ENCODE measurements at regions of chr16 and their contacts with region 1.

Region 1: GRCh38 chr16:88743693-88744576 is 37.6 kb downstream of the CTU2 start:
- DNase-seq: peak; percentile 77 to 88 (median 82)
- ATAC-seq: peak in 3 of 4 donors; percentile 55 to 69 (median 58)
- H3K4me3 ChIP-seq: peak overlapping the region in 1 of 12 donors; percentile 3
- H3K27ac ChIP-seq: peak overlapping the region in 7 of 12 donors; percentile 49 to 84 (median 75)
- H3K4me1 ChIP-seq: peaks cover 0 to 43% (median 27%) of the 10 kb centered on the region in 12 donors
- H3K27me3 ChIP-seq: no peaks in the 10 kb centered on the region
- CTCF ChIP-seq: peak in 11 of 12 donors; percentile 77 to 94 (median 89)
- POLR2A ChIP-seq: no peak

Region 2: GRCh38 chr16:88773812-88774291 is 29.9 kb after region 1 on chr16:
- intact Hi-C with region 1: no loop called
- DNase-seq: peak in 4 of 5 donors; percentile 75 to 83 (median 81)
- ATAC-seq: peak; percentile 61 to 80 (median 76)
- H3K4me3 ChIP-seq: no peak overlapping the region
- H3K27ac ChIP-seq: peak overlapping the region in 5 of 12 donors; percentile 14 to 83 (median 24)
- H3K4me1 ChIP-seq: peaks cover 3 to 81% (median 55%) of the 10 kb centered on the region in 12 donors
- H3K27me3 ChIP-seq: no peaks in the 10 kb centered on the region
- CTCF ChIP-seq: no peak
- POLR2A ChIP-seq: no peak

Region 3: GRCh38 chr16:88785106-88785924 is 41.4 kb after region 1 on chr16 and contains the start of gene PIEZO1:
- intact Hi-C with region 1: loop called (anchors 1 to 2 kb)
- DNase-seq: peak; percentile 71 to 90 (median 77)
- ATAC-seq: peak in 3 of 4 donors; percentile 34 to 74 (median 70)
- H3K4me3 ChIP-seq: peak within 1 kb of the TSS; percentile 56 to 92 (median 70)
- H3K27ac ChIP-seq: peak within 1 kb of the TSS; percentile 77 to 95 (median 88)
- H3K4me1 ChIP-seq: peaks cover 0 to 57% (median 35%) of the 10 kb centered on the region in 12 donors
- H3K27me3 ChIP-seq: no peaks in the 10 kb centered on the region
- CTCF ChIP-seq: peak; percentile 78 to 91 (median 88)
- POLR2A ChIP-seq: peak in 1 of 2 donors; percentile 76
- total RNA-seq, gene PIEZO1: 14.2 to 59.7 (median 19.7) TPM

Region 4: DNA sequence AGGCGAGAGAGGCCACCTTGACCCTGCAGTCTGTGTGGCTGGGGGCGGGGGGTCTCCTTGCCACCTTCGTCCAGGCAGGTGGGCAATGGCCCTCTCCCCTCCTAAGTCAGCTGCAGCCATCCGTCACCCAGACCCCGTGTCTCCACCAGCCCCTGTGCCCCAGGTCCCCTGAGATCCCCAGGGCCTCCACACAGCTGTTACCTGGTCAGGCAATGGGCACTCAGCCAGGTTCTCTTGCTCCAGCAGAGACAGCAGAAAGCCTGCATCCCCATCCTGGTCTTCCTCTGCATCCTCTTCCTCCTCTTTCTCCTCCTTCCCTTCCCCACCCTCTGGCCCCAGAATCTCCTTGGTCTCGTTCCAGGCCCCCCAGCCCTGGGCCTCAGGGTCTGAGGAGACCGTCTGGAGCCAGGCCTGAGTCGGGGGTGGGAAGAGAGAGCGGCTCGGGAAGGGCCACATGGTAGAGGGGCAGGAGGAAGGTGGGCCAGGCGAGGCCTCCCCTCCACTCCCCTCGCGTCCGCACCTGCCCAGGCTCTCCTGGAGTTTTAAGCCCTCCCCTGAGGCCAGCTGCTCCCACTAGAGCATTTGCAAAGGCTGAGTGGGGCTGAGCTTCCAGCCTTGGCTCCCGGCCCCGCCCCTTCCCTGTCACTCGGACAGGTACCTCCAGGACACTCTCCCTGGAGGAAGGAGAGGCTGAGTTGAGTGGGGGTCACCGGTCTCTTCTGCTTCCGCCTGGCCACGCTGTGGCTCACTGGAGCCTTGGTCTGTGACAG is 122.4 kb after region 1 on chr16 and contains the start of gene PABPN1L:
- intact Hi-C with region 1: loop called in 1 of 10 experiments (anchors 10 kb)
- DNase-seq: no peak
- ATAC-seq: no peak
- H3K4me3 ChIP-seq: no peak within 1 kb of the TSS
- H3K27ac ChIP-seq: no peak within 1 kb of the TSS
- H3K4me1 ChIP-seq: peaks cover 0 to 16% (median 5%) of the 10 kb centered on the region in 12 donors
- H3K27me3 ChIP-seq: peaks cover 0 to 6% (median 0%) of the 10 kb centered on the region in 9 donors
- CTCF ChIP-seq: no peak
- POLR2A ChIP-seq: no peak
- total RNA-seq, gene PABPN1L: not detected

Region 5: GRCh38 chr16:89171463-89172170 is 427.7 kb after region 1 on chr16 and contains the start of gene CDH15:
- intact Hi-C with region 1: loop called in 8 of 10 experiments (anchors 2 to 5 kb)
- DNase-seq: peak; percentile 85 to 95 (median 92)
- ATAC-seq: peak; percentile 91 to 96 (median 94)
- H3K4me3 ChIP-seq: peak within 1 kb of the TSS in 10 of 12 donors; percentile 5 to 44 (median 40)
- H3K27ac ChIP-seq: no peak within 1 kb of the TSS
- H3K4me1 ChIP-seq: peaks cover 0 to 20% (median 12%) of the 10 kb centered on the region in 12 donors
- H3K27me3 ChIP-seq: peaks cover 4 to 61% (median 29%) of the 10 kb centered on the region in 9 donors
- CTCF ChIP-seq: no peak
- POLR2A ChIP-seq: no peak
- total RNA-seq, gene CDH15: 0.16 to 0.32 TPM in 2 of 9 donors, not detected in the others

Measured in heart left ventricle (tissue), 16 donors.